ENCODE measurements at regions of chr22 and their contacts with region 1.

Region 1: DNA sequence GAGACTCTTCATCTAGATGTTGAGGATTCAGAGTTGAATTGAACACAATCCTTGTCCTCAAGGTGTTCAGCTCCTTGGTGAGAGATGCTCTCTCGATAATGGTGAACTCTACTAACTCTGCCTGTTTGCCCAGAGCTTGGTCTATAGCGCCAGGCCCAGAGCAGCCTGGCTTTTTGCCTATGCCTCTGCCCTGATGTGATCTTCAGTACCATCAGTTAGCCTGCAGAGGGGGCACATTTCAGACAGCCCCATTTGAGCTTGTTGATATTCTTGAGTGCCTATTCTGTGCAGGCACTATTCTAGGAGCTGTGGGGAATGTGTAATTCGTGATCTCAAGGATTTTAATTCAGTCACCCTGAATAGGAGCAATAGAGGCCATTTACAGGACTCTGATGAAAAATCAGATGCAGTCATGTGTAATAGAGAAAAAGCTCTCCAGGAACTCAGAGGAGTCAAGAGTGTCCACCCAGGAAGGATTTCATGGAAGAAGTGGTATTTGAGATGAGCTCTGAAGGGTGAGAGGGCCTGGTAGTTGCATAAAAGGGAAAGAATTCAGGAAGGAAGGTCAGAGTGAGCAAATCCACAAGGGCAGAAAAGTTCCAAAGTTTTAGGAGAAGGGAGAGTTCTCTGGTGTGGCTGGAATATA is 19.3 kb downstream of the GTPBP1 start:
- DNase-seq: peak; percentile 77
- H3K4me3 ChIP-seq: no peak overlapping the region
- H3K27ac ChIP-seq: no peak overlapping the region
- H3K4me1 ChIP-seq: no peaks in the 10 kb centered on the region
- H3K27me3 ChIP-seq: no peaks in the 10 kb centered on the region
- CTCF ChIP-seq: peak; percentile 72

Region 2: DNA sequence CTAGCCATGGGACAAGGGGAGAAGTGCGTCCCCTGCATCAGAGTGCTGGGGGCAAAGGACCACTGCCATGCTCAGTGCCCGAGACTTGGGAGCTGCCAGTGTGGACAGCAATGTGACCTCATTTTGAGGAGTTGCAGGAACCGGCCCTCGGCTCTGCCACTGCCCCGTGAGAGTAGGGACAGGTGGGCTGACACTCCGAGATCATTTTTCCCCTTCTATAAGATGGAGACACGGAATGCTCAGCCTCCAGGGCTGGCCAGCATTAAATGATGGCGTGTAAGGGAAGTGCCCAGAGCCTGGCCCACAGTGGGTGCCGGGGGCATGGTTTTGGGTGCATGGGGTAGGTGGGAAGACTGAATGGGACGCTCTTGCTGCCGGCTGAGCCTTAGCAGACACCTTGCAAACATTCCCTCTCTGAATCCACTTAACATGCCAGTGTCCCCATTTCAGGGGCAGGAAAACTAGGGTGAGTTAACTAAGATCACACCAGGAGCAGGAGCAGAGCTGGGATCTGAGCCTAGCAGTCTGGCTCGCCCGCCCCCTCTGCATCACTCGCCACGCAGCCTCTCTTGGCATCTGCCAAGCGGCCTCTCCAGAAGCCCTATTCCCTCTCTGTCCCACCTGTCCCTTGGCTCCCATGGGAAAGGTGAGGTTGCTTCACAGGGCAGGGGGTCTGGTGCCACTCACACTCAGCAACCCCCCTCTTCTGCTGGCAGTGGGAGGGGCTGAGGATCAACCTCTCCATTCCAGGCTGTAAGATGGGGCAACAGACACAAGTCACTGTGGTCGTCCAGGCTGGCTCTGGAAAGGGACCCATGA is 105.2 kb after region 1 on chr22:
- CTCF ChIA-PET with region 1: interaction called, 14 read pairs
- POLR2A ChIA-PET with region 1: no interaction called
- intact Hi-C with region 1: no loop called
- DNase-seq: no peak
- H3K4me3 ChIP-seq: no peak overlapping the region
- H3K27ac ChIP-seq: no peak overlapping the region
- H3K4me1 ChIP-seq: peaks cover 10% of the 10 kb centered on the region
- H3K27me3 ChIP-seq: no peaks in the 10 kb centered on the region
- CTCF ChIP-seq: no peak

Region 3: GRCh38 chr22:39446295-39446721 is 721.3 kb after region 1 on chr22:
- CTCF ChIA-PET with region 1: no interaction called
- POLR2A ChIA-PET with region 1: interaction called, 15 read pairs
- intact Hi-C with region 1: no loop called
- DNase-seq: no peak
- H3K4me3 ChIP-seq: no peak overlapping the region
- H3K27ac ChIP-seq: no peak overlapping the region
- H3K4me1 ChIP-seq: no peaks in the 10 kb centered on the region
- H3K27me3 ChIP-seq: no peaks in the 10 kb centered on the region
- CTCF ChIP-seq: no peak

Region 4: DNA sequence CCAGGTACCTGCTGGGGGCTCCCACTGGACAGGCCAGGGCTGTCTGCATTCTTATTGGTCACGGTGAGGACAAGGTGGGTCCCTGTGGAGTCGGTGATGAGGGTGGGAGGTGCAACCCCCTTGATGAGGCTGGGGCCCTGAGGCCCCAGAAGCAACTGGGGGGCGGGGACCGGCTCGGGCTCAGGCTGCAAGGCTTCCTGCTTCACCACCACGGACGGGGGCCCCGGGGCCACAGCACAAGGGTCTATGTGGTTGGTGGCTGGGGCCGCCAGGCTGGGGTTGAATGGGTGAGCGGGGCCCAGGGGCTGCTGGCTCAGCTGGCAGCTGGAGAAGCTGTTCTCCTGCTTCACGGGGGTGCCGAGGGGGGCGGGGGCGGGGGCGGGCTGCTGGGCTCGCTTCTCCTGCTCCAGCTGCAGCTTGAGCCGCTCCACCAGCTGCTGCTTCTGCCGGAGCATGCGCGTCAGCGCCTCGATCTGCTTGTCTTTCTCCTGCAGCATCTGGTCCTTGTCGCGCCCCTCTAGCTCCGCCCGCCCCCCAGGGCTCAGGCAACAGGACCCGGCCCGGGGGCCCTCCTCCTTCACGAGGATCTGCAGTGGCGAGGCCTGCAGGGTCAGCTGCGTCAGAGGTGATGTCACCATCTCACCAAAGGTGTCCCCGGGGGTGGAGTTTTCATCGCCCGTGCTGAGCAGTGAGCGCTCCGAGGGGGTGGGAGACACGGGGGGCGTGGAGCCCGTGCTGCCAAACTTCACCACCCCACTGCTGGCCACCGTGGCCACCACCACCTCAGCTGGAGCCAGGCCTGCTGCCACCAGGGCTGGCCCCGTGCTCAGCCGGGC is 1693.5 kb after region 1 on chr22:
- CTCF ChIA-PET with region 1: no interaction called
- POLR2A ChIA-PET with region 1: no interaction called
- intact Hi-C with region 1: no loop called
- DNase-seq: peak; percentile 76
- H3K4me3 ChIP-seq: no peak overlapping the region
- H3K27ac ChIP-seq: peak overlapping the region; percentile 63
- H3K4me1 ChIP-seq: peaks cover 16% of the 10 kb centered on the region
- H3K27me3 ChIP-seq: no peaks in the 10 kb centered on the region
- CTCF ChIP-seq: no peak